ENCODE measurements at regions of chr6 and their contacts with region 1.

Region 1: GRCh38 chr6:55047451-55048044 is 126.8 kb upstream of the HCRTR2 start:
- DNase-seq: no peak
- H3K4me3 ChIP-seq: no peak overlapping the region
- H3K27ac ChIP-seq: no peak overlapping the region
- H3K4me1 ChIP-seq: no peaks in the 10 kb centered on the region
- H3K27me3 ChIP-seq: no peaks in the 10 kb centered on the region
- CTCF ChIP-seq: no peak
- POLR2A ChIP-seq: no peak

Region 2: DNA sequence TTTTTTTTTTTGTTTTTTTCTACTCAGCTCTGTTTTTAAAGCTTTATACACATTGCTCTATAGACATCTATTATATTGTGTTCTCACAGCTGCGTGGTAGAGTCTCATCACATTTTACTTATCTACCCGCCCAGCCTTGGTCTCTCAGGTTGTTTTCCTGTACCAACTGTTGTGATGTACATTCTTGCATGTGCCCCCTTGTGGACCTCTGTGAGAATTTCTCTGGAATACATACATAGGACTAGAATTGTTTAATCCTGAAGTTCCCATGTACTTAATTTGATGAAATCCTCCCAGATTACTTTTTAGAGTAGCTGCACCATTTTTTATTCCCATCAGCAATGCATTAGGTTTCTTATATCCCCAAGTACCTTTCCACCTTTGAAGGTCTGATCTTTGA is 779.8 kb before region 1 on chr6:
- CTCF ChIA-PET with region 1: no interaction called
- POLR2A ChIA-PET with region 1: interaction called, 10 read pairs
- dilution Hi-C with region 1: no loop called
- intact Hi-C with region 1: no loop called
- DNase-seq: peak; percentile 65
- H3K4me3 ChIP-seq: no peak overlapping the region
- H3K27ac ChIP-seq: no peak overlapping the region
- H3K4me1 ChIP-seq: peaks cover 7% of the 10 kb centered on the region
- H3K27me3 ChIP-seq: no peaks in the 10 kb centered on the region
- CTCF ChIP-seq: peak; percentile 44 to 48
- POLR2A ChIP-seq: no peak

Region 3: GRCh38 chr6:55117267-55117666 is 69.7 kb after region 1 on chr6:
- CTCF ChIA-PET with region 1: no interaction called
- POLR2A ChIA-PET with region 1: no interaction called
- dilution Hi-C with region 1: no loop called
- intact Hi-C with region 1: no loop called
- DNase-seq: no peak
- H3K4me3 ChIP-seq: no peak overlapping the region
- H3K27ac ChIP-seq: no peak overlapping the region
- H3K4me1 ChIP-seq: no peaks in the 10 kb centered on the region
- H3K27me3 ChIP-seq: no peaks in the 10 kb centered on the region
- CTCF ChIP-seq: no peak
- POLR2A ChIP-seq: no peak